Cardiac septum (tissue), 1 donor: ENCODE measurements at regions of chr18 and their contacts with region 1.

Region 1: GRCh38 chr18:34661464-34662111 is 48.5 kb upstream of the DTNA start:
- DNase-seq: no peak

Region 2: GRCh38 chr18:34493099-34493544 is 168.5 kb before region 1 on chr18:
- intact Hi-C with region 1: loop called (anchors 2 kb)
- DNase-seq: peak; percentile 85

Region 3: GRCh38 chr18:34592961-34593382 is 68.6 kb before region 1 on chr18:
- intact Hi-C with region 1: loop called (anchors 5 kb)
- DNase-seq: peak; percentile 81